ENCODE measurements at regions of chr3 and their contacts with region 1.

Region 1: GRCh38 chr3:187714404-187714979 is 12.1 kb upstream of the RTP2 start:
- DNase-seq: peak; percentile 70
- H3K4me3 ChIP-seq: no peak overlapping the region
- H3K27ac ChIP-seq: no peak overlapping the region
- H3K4me1 ChIP-seq: no peaks in the 10 kb centered on the region
- H3K27me3 ChIP-seq: no peaks in the 10 kb centered on the region
- CTCF ChIP-seq: peak; percentile 96 to 98

Region 2: GRCh38 chr3:187112934-187113793 is 601.3 kb before region 1 on chr3:
- CTCF ChIA-PET with region 1: no interaction called
- dilution Hi-C with region 1: no loop called
- in situ Hi-C with region 1: no loop called
- intact Hi-C with region 1: loop called (anchors 5 kb)
- DNase-seq: peak; percentile 24
- H3K4me3 ChIP-seq: no peak overlapping the region
- H3K27ac ChIP-seq: no peak overlapping the region
- H3K4me1 ChIP-seq: peaks cover 7% of the 10 kb centered on the region
- H3K27me3 ChIP-seq: no peaks in the 10 kb centered on the region
- CTCF ChIP-seq: peak; percentile 48 to 54

Region 3: DNA sequence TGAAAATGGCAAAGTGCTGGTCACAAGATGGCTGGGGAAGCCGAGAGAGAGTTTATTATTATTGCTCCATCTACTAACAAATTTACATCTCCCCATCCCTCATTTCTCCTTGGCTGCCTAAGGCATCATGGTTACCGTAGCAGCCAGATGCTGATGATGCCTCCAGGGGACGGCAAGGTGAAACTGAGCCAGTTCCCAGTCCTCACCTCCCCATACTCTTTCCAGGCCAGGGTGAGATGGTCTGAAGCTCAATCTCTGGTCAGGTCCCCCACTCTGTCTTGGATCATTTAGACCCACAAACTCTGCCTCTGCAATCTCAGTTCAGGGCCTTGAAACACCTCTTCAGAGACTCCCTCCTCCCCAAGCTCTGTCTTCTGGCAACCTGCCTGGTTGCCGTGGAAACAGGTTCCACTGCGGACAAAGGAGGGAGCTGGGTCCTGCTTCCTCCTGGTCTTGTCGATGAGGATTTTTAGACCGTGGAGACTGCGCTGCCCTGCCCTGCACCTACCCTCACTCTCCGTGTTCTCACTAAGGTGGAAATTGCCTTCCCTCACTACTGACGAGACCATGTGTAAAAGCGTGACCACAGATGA is 517.3 kb before region 1 on chr3 and contains the start of gene RTP1:
- CTCF ChIA-PET with region 1: no interaction called
- dilution Hi-C with region 1: no loop called
- in situ Hi-C with region 1: no loop called
- intact Hi-C with region 1: loop called (anchors 1 kb)
- DNase-seq: no peak
- H3K4me3 ChIP-seq: no peak within 1 kb of the TSS
- H3K27ac ChIP-seq: no peak within 1 kb of the TSS
- H3K4me1 ChIP-seq: no peaks in the 10 kb centered on the region
- H3K27me3 ChIP-seq: no peaks in the 10 kb centered on the region
- CTCF ChIP-seq: no peak
- total RNA-seq, gene RTP1: not detected

Region 4: DNA sequence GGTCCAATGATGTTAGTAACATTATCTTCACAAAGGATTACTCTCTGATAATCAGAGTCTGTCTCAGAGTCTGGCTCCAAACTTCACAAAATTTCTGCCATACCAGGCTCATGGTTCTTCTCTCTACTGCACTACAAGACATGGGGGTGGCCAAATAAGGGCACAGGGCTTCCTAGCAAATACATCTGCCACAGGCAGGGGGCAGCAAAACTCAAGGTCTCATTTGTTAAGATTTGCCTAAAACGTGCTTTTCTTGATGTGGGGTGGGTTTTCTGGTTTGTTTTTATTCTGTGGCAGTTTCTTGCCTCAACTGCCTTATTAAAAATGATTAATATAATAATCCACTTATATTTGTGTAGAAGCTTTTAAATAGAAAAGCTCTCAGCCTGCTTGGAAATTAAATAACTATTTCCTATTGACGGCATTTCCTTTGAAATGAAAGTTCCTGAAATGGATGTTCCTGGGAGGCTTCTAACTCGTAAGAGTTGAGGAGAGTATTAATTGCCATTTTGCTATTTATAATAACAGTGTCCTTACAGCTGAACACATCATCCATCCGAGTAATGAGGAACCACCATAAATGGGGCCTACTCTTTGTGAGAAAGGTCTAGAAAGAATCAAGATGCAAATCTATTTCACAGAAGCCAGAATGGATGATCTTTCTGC is 98.1 kb before region 1 on chr3:
- CTCF ChIA-PET with region 1: no interaction called
- dilution Hi-C with region 1: no loop called
- in situ Hi-C with region 1: no loop called
- intact Hi-C with region 1: loop called (anchors 1 kb)
- DNase-seq: peak; percentile 23
- H3K4me3 ChIP-seq: no peak overlapping the region
- H3K27ac ChIP-seq: no peak overlapping the region
- H3K4me1 ChIP-seq: no peaks in the 10 kb centered on the region
- H3K27me3 ChIP-seq: no peaks in the 10 kb centered on the region
- CTCF ChIP-seq: peak; percentile 81 to 90

Region 5: GRCh38 chr3:187679638-187680396 is 34.7 kb before region 1 on chr3:
- CTCF ChIA-PET with region 1: interaction called, 3 read pairs
- dilution Hi-C with region 1: no loop called
- in situ Hi-C with region 1: no loop called
- intact Hi-C with region 1: loop called (anchors 1 kb)
- DNase-seq: peak; percentile 48
- H3K4me3 ChIP-seq: no peak overlapping the region
- H3K27ac ChIP-seq: no peak overlapping the region
- H3K4me1 ChIP-seq: peaks cover 5% of the 10 kb centered on the region
- H3K27me3 ChIP-seq: peaks cover 14% of the 10 kb centered on the region
- CTCF ChIP-seq: peak; percentile 86 to 95

Measured in mammary epithelial cell (primary cell).